ENCODE measurements at regions of chr4 and their contacts with region 1.

Region 1: GRCh38 chr4:73178389-73178788 is 80.2 kb downstream of the ANKRD17 start:
- DNase-seq: no peak
- H3K4me3 Mint-ChIP-seq: no peak overlapping the region
- H3K27ac Mint-ChIP-seq: no peak overlapping the region
- H3K4me1 Mint-ChIP-seq: peaks cover 17% of the 10 kb centered on the region
- H3K27me3 Mint-ChIP-seq: no peaks in the 10 kb centered on the region

Region 2: GRCh38 chr4:72326692-72327632 is 851.4 kb before region 1 on chr4:
- intact Hi-C with region 1: no loop called
- DNase-seq: no peak
- H3K4me3 Mint-ChIP-seq: no peak overlapping the region
- H3K27ac Mint-ChIP-seq: no peak overlapping the region
- H3K4me1 Mint-ChIP-seq: no peaks in the 10 kb centered on the region
- H3K27me3 Mint-ChIP-seq: peaks cover 6% of the 10 kb centered on the region

Region 3: DNA sequence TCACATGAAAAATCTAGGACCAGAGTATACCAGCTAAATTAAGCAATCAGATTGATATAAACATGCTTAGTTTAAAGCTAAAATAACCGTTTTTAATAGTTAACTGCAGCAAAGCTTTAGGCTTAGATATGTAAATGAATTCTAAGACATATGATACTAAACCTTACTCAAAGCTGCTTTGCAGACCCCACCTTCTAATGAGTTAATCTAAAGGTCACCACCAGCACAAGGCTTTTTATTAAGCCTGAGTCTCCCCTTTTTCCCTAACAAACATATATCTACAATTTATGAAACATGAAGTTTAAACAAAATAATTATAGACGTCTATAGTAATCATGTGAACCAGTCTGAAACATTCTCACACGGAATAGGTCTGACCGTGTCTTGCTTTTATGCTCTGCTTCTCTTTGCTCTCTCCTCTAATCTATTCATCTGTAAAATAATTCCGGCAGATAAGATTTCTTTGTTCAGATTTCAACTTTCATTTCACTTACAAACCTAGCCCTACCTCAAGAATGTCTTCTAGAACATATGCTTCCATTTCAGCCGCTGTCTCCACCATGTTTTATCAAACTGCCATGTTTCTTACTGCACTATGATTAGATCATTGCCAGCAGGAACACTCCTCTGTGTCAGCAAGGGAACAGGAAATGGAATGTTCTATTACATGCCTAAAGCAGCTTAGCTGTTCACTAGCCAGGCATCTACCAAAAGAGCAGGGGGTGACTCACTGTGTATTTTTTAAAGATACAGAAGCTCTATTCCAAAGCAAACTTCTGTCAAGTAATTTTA is 44.3 kb after region 1 on chr4:
- intact Hi-C with region 1: loop called (anchors 5 kb)
- DNase-seq: peak; percentile 60
- H3K4me3 Mint-ChIP-seq: no peak overlapping the region
- H3K27ac Mint-ChIP-seq: no peak overlapping the region
- H3K4me1 Mint-ChIP-seq: peaks cover 37% of the 10 kb centered on the region
- H3K27me3 Mint-ChIP-seq: no peaks in the 10 kb centered on the region

Region 4: DNA sequence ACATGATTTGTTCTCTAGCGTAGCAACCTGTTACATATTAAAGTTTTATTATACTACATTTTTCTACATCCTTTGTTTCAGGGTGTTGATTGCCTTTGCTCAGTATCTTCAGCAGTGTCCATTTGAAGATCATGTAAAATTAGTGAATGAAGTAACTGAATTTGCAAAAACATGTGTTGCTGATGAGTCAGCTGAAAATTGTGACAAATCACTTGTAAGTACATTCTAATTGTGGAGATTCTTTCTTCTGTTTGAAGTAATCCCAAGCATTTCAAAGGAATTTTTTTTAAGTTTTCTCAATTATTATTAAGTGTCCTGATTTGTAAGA is 228.1 kb after region 1 on chr4:
- intact Hi-C with region 1: no loop called
- DNase-seq: no peak
- H3K4me3 Mint-ChIP-seq: no peak overlapping the region
- H3K27ac Mint-ChIP-seq: no peak overlapping the region
- H3K4me1 Mint-ChIP-seq: no peaks in the 10 kb centered on the region
- H3K27me3 Mint-ChIP-seq: no peaks in the 10 kb centered on the region